Transverse colon (tissue), 4 donors: ENCODE measurements at regions of chr12 and their contacts with region 1.

Region 1: DNA sequence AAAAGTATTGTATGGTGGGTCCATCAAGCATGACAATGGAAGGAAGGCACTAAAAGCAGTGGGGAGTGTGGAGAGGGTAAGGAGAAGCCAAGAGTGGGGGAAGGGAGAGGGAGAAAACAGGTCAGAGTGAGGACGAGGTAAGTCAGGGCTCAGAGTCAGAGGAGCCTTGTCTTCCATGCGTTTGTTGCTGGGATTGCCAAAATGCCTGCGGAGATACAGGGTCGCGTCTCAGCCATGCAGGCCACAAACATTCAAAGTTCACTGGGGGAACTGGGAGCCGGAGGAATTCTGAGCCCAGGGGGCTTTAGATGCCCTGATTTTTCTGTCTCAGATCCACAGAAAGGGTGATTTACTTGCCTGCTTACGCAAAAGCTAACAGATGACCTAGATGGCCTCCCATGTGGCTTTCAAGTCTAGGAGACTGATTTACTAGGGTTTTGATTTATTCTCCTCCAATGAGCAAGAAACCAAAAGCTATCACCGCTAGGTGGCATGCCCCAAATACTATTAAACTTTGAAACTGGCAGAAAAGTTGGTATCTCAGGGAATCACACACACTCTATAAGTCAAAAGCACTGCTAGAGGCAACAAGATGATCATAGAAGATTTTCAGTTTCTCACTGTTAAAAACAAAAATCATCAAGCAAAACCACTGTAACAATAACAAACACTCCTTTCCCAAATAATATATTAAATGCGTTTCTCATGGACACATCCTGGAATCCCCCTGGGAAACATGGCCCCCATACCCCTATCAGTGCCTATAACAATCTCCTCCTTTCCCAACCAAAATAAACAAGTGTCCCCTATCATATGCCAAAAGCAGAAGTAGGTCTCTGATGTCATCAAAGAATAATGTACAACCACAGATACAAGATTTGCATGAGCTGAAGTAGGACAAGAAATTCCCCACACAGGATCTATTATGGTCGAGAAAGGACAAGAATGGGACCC is 26.6 kb upstream of the MDM1 start:
- DNase-seq: peak; percentile 71
- H3K4me3 ChIP-seq: no peak overlapping the region
- H3K27ac ChIP-seq: peak overlapping the region; percentile 11 to 64 (median 30)
- H3K4me1 ChIP-seq: peaks cover 0 to 14% (median 7%) of the 10 kb centered on the region in 4 donors
- H3K27me3 ChIP-seq: no peaks in the 10 kb centered on the region
- CTCF ChIP-seq: peak; percentile 63 to 86 (median 67)
- EP300 ChIP-seq: no peak
- POLR2A ChIP-seq: no peak

Region 2: GRCh38 chr12:68040450-68041075 is 318.2 kb before region 1 on chr12:
- in situ Hi-C with region 1: no loop called
- intact Hi-C with region 1: no loop called
- DNase-seq: peak; percentile 63
- H3K4me3 ChIP-seq: no peak overlapping the region
- H3K27ac ChIP-seq: no peak overlapping the region
- H3K4me1 ChIP-seq: no peaks in the 10 kb centered on the region
- H3K27me3 ChIP-seq: no peaks in the 10 kb centered on the region
- CTCF ChIP-seq: peak; percentile 66 to 87 (median 82)
- EP300 ChIP-seq: no peak
- POLR2A ChIP-seq: no peak

Region 3: DNA sequence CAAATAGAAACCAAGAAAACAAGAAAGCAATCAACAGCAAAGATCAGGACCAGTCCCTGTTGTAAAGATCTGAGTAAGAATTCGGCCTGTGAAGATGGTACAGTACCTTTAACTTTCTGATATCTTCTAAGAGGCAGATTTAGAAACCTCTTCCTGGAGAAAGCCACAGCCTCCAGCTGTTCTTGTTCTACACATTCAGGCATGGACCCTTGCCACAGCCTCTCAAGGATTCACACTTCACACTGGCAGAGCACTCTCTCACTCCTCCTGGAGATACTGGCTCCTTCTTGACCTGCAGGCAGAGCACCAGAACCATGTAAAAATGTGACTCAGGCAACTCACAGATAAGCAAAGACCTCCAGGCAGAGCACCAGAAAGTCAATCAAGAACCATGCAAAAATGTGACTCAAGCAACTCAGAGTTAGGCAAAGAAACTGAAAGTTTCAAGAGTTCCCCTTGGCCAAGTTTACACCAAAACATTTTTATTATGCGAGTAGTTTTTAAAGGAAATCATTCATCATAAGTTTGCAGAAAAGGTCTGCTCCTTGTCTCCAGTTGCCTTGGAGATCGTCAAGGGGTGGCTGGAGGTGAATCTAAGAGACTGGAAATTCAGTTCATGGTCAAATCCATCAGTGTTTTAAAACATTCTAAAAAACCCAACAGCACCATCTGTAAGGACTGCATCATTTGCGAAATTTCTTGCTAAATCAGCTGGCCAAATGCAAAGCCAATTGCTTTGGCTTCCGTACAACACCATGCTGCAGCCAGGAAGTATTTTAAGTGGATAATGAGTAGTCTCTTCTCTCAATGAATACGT is 92.7 kb after region 1 on chr12:
- in situ Hi-C with region 1: loop called in 1 of 4 experiments (anchors 25 kb)
- intact Hi-C with region 1: no loop called
- DNase-seq: peak; percentile 44
- H3K4me3 ChIP-seq: peak overlapping the region in 1 of 4 donors; percentile 9
- H3K27ac ChIP-seq: peak overlapping the region; percentile 60 to 79 (median 66)
- H3K4me1 ChIP-seq: peaks cover 14 to 39% (median 21%) of the 10 kb centered on the region in 4 donors
- H3K27me3 ChIP-seq: no peaks in the 10 kb centered on the region
- CTCF ChIP-seq: no peak
- EP300 ChIP-seq: no peak
- POLR2A ChIP-seq: no peak

Region 4: GRCh38 chr12:68521321-68521839 is 162.6 kb after region 1 on chr12:
- in situ Hi-C with region 1: no loop called
- intact Hi-C with region 1: no loop called
- DNase-seq: no peak
- H3K4me3 ChIP-seq: no peak overlapping the region
- H3K27ac ChIP-seq: no peak overlapping the region
- H3K4me1 ChIP-seq: no peaks in the 10 kb centered on the region
- H3K27me3 ChIP-seq: no peaks in the 10 kb centered on the region
- CTCF ChIP-seq: no peak
- EP300 ChIP-seq: no peak
- POLR2A ChIP-seq: no peak

Region 5: DNA sequence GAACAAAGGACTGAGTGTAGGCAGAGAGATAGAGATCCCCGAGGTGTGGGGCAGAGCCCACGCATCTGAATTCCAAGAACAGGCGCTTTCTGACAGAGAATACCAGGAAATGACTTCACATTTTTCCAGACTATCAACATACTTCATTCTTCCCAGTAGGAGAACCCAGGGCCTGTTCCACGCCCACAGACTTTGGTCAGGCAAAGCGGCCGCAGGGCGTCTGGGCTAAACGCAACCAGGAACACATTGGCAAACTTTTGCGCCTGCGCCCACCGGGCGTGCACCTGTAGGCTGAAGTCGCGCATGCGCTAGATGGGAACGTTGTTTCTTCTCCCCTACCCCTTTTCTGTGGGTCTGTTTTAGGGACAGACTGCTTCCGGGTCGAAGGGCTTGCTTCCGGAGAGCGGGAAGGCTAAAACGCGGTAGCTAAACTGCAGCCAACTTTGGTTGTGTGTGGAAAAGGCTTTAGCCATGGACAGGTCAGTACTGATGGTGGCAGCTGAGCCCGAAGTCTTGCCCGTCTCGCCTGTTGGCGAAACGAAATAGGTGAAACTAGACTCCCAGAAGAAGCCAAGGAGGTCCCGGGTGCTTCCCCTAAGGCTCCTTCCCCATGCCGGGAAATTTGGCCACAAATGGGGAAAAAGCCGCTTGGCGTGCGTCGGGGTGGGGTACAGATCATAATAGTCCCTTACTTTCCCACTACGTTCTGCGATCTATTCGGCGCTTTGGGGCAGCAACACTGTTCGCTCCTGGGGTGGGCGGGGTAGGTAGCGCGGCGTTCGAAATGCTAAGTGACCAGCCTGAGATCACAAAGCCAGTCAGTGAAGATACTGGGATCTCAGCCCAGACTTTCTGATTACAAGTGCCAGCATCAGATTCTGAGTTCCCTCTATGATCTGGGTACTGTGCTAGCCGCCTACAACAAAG is 328.0 kb after region 1 on chr12 and contains the start of gene NUP107:
- in situ Hi-C with region 1: loop called in 3 of 4 experiments (anchors 25 kb)
- intact Hi-C with region 1: loop called (anchors 10 kb)
- DNase-seq: peak; percentile 99
- H3K4me3 ChIP-seq: peak within 1 kb of the TSS; percentile 76 to 80 (median 77)
- H3K27ac ChIP-seq: peak within 1 kb of the TSS; percentile 78 to 88 (median 84)
- H3K4me1 ChIP-seq: peaks cover 3 to 24% (median 13%) of the 10 kb centered on the region in 4 donors
- H3K27me3 ChIP-seq: no peaks in the 10 kb centered on the region
- CTCF ChIP-seq: peak in 3 of 5 experiments; percentile 8 to 61 (median 58)
- EP300 ChIP-seq: peak; percentile 68
- POLR2A ChIP-seq: peak; percentile 66
- total RNA-seq, gene NUP107: 6.4 to 29.2 (median 22.6) TPM